ENCODE measurements at regions of chr6 and their contacts with region 1.

Region 1: GRCh38 chr6:24064082-24064481 is 61.9 kb upstream of the NRSN1 start:
- DNase-seq: peak; percentile 2
- ATAC-seq: no peak
- H3K4me3 ChIP-seq: no peak overlapping the region
- H3K27ac ChIP-seq: no peak overlapping the region
- H3K4me1 ChIP-seq: no peaks in the 10 kb centered on the region
- H3K27me3 ChIP-seq: no peaks in the 10 kb centered on the region
- CTCF ChIP-seq: peak; percentile 26; the same call in 1 of the 2 replicates

Region 2: GRCh38 chr6:24043848-24044247 is 20.2 kb before region 1 on chr6:
- CTCF ChIA-PET with region 1: no interaction called
- POLR2A ChIA-PET with region 1: no interaction called
- in situ Hi-C with region 1: no loop called
- intact Hi-C with region 1: loop called (anchors 1 kb)
- DNase-seq: no peak
- ATAC-seq: no peak
- H3K4me3 ChIP-seq: no peak overlapping the region
- H3K27ac ChIP-seq: no peak overlapping the region
- H3K4me1 ChIP-seq: no peaks in the 10 kb centered on the region
- H3K27me3 ChIP-seq: no peaks in the 10 kb centered on the region
- CTCF ChIP-seq: no peak

Region 3: GRCh38 chr6:24205020-24205492 is 141.0 kb after region 1 on chr6:
- CTCF ChIA-PET with region 1: no interaction called
- POLR2A ChIA-PET with region 1: no interaction called
- in situ Hi-C with region 1: no loop called
- intact Hi-C with region 1: loop called (anchors 5 kb)
- DNase-seq: peak; percentile 24
- ATAC-seq: peak; percentile 81
- H3K4me3 ChIP-seq: no peak overlapping the region
- H3K27ac ChIP-seq: no peak overlapping the region
- H3K4me1 ChIP-seq: no peaks in the 10 kb centered on the region
- H3K27me3 ChIP-seq: no peaks in the 10 kb centered on the region
- CTCF ChIP-seq: peak; percentile 76

Region 4: DNA sequence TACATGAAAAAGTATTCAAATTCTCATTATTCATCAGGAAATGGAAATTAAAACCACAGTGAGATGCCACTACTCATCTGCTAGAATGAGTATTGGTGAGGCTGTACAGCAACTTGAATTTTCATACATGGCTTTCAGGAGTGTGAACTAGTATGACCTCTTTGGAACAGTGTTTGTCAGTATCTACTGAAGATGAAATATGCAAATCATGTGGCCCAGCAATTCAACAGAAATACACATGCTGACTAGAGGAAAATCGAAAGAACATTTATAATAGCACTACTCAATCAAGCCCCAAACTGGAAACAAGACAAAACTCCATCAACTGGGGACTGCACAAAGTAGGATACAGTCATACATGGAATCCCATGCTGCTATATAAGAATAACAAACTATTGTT is 191.6 kb after region 1 on chr6:
- CTCF ChIA-PET with region 1: no interaction called
- POLR2A ChIA-PET with region 1: no interaction called
- in situ Hi-C with region 1: no loop called
- intact Hi-C with region 1: no loop called
- DNase-seq: no peak
- ATAC-seq: no peak
- H3K4me3 ChIP-seq: no peak overlapping the region
- H3K27ac ChIP-seq: no peak overlapping the region
- H3K4me1 ChIP-seq: no peaks in the 10 kb centered on the region
- H3K27me3 ChIP-seq: peaks cover 6% of the 10 kb centered on the region
- CTCF ChIP-seq: no peak

Region 5: DNA sequence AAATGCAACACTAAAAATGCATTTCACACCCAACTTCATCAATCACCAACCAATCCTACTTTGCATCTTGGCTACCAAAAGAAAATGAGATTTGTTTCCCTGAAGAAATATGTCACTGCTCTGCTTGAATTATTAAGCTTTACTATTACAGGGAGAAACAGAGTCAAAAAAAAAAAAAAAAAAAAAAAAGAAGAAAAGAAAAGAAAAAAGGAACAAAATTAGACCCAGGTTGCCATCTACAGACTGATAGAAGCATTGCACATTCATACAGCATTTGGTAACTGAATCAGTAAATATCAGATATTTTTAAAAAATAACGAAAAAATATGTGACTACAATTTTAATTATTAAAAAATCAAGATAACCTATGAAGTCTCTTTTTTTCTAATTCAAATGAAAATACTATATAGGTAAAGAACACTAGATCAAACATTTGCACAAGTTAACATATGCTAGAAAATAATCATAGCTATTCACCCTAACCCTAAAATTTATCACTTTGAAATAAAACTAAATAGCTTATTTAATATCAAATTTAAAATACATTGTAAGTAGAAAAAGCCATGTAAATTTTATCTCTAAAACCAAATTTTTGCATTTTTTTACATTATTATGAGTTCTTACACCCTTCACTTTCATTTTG is 210.5 kb after region 1 on chr6:
- CTCF ChIA-PET with region 1: no interaction called
- POLR2A ChIA-PET with region 1: no interaction called
- in situ Hi-C with region 1: no loop called
- intact Hi-C with region 1: loop called (anchors 2 kb)
- DNase-seq: no peak
- ATAC-seq: no peak
- H3K4me3 ChIP-seq: no peak overlapping the region
- H3K27ac ChIP-seq: no peak overlapping the region
- H3K4me1 ChIP-seq: no peaks in the 10 kb centered on the region
- H3K27me3 ChIP-seq: peaks cover 2% of the 10 kb centered on the region; the same call in 1 of the 2 replicates
- CTCF ChIP-seq: peak; percentile 58; the same call in 1 of the 2 replicates